ENCODE measurements at regions of chr6 and their contacts with region 1.

Region 1: GRCh38 chr6:26285143-26286134 is 79.6 kb upstream of the BTN3A2 start:
- DNase-seq: peak; percentile 96 to 98 (median 98)
- ATAC-seq: peak; percentile 94 to 96 (median 94)
- H3K4me3 ChIP-seq: peak overlapping the region; percentile 55 to 91 (median 72)
- H3K27ac ChIP-seq: peak overlapping the region; percentile 88 to 98 (median 97)
- H3K4me1 ChIP-seq: peaks cover 0 to 28% (median 9%) of the 10 kb centered on the region in 12 donors
- H3K27me3 ChIP-seq: no peaks in the 10 kb centered on the region
- CTCF ChIP-seq: no peak
- POLR2A ChIP-seq: peak in 1 of 2 donors; percentile 78

Region 2: DNA sequence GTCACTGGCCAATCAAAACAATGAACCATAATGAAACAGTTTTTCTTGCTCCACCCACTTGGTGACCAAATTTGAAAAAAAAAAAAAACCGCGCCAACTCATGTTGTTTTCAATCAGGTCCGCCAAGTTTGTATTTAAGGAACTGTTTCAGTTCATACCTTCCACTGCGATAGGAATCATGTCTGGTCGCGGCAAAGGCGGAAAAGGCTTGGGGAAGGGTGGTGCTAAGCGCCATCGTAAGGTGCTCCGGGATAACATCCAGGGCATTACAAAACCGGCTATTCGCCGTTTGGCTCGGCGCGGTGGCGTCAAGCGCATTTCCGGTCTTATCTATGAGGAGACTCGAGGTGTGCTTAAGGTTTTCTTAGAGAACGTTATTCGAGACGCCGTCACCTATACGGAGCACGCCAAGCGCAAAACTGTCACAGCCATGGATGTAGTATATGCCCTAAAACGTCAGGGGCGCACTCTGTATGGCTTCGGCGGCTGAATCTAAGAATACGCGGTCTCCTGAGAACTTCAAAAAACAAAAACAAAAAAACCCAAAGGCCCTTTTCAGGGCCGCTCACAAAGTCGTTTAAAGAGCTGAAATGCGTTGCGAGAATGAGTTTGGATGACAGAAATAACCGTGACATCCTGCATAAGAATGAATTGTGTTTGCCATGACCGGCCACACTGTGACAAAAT is 181.5 kb before region 1 on chr6:
- intact Hi-C with region 1: loop called in 1 of 10 experiments (anchors 10 kb)
- DNase-seq: peak; percentile 86 to 90 (median 87)
- ATAC-seq: peak; percentile 81 to 95 (median 93)
- H3K4me3 ChIP-seq: peak overlapping the region; percentile 5 to 69 (median 60)
- H3K27ac ChIP-seq: peak overlapping the region; percentile 18 to 90 (median 77)
- H3K4me1 ChIP-seq: peaks cover 0 to 18% (median 8%) of the 10 kb centered on the region in 12 donors
- H3K27me3 ChIP-seq: no peaks in the 10 kb centered on the region
- CTCF ChIP-seq: peak in 10 of 12 donors; percentile 17 to 54 (median 36)
- POLR2A ChIP-seq: peak; percentile 37 to 95

Region 3: DNA sequence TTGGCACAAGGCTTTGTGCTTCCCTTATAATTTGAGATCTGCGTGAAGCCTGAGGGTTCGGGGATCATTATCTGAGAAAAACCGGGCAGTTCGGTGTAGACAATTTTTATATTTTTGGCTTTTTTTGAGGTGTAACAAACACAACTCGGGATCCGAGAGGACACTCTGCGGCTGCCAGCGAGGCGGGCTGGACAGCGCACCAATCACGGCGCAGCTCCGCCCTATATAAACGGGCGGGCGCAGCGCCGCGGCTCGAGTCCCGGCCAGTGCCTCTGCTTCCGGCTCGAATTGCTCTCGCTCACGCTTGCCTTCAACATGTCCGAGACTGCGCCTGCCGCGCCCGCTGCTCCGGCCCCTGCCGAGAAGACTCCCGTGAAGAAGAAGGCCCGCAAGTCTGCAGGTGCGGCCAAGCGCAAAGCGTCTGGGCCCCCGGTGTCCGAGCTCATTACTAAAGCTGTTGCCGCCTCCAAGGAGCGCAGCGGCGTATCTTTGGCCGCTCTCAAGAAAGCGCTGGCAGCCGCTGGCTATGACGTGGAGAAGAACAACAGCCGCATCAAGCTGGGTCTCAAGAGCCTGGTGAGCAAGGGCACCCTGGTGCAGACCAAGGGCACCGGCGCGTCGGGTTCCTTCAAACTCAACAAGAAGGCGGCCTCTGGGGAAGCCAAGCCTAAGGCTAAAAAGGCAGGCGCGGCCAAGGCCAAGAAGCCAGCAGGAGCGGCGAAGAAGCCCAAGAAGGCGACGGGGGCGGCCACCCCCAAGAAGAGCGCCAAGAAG is 129.2 kb before region 1 on chr6:
- intact Hi-C with region 1: loop called in 1 of 10 experiments (anchors 1 kb)
- DNase-seq: peak; percentile 92 to 96 (median 93)
- ATAC-seq: peak; percentile 80 to 89 (median 86)
- H3K4me3 ChIP-seq: peak overlapping the region; percentile 49 to 94 (median 78)
- H3K27ac ChIP-seq: peak overlapping the region; percentile 70 to 98 (median 95)
- H3K4me1 ChIP-seq: peaks cover 0 to 30% (median 11%) of the 10 kb centered on the region in 12 donors
- H3K27me3 ChIP-seq: no peaks in the 10 kb centered on the region
- CTCF ChIP-seq: peak in 1 of 12 donors; percentile 7
- POLR2A ChIP-seq: peak; percentile 67 to 99

Region 4: DNA sequence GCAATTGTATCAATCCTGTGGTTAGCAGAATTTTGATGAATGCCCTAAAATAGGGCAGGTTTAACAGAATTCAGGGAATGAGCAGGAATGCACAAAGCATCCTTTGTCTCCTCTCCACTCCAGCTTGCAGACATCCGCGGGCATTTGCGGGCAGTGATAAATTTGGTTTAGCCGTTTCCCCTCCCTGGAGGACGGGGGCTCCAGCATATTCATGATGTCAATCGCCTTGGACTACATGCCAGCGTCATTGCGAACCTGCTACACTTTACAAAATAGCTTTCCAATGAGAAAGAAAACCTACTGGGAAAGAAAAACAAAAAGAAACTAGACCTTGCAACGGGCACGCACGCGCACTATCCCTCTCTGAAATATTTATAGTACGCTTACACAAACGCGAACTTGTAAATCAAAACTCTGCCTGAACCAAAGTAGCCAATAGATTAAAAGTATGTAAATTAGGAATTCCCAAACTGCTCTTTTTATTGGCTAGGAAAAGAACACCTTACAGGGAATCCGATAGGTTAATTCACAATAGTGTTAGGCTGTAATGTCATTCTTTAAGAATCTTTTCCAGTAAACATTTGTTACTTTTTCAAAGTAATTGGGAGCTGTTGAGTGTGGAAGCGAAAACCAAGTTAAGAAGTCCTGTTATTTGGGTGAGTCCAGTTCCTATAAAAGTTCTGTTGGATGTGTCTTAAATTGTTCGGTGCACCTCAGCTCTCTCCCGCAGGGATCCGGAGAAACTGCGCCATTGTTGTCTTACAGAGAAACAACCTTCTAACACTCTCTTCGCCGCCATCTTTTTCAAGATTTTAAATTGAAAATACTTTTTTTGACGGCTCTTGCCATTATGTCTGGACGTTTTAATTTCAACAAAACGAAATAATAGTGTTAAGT is 61.5 kb before region 1 on chr6:
- intact Hi-C with region 1: loop called in 2 of 10 experiments (anchors 5 to 10 kb)
- DNase-seq: peak; percentile 46 to 72 (median 70)
- ATAC-seq: peak; percentile 89 to 95 (median 92)
- H3K4me3 ChIP-seq: peak overlapping the region; percentile 15 to 72 (median 56)
- H3K27ac ChIP-seq: peak overlapping the region; percentile 75 to 97 (median 90)
- H3K4me1 ChIP-seq: peaks cover 0 to 13% (median 1%) of the 10 kb centered on the region in 12 donors
- H3K27me3 ChIP-seq: peaks cover 0 to 40% (median 4%) of the 10 kb centered on the region in 9 donors
- CTCF ChIP-seq: no peak
- POLR2A ChIP-seq: peak in 1 of 2 donors; percentile 63

Region 5: GRCh38 chr6:26312501-26313390 is 27.3 kb after region 1 on chr6:
- intact Hi-C with region 1: loop called in 2 of 10 experiments (anchors 2 kb)
- DNase-seq: peak; percentile 60 to 80 (median 75)
- ATAC-seq: peak; percentile 77 to 93 (median 88)
- H3K4me3 ChIP-seq: peak overlapping the region; percentile 12 to 66 (median 50)
- H3K27ac ChIP-seq: peak overlapping the region in 9 of 12 donors; percentile 4 to 67 (median 27)
- H3K4me1 ChIP-seq: peaks cover 0 to 27% (median 7%) of the 10 kb centered on the region in 12 donors
- H3K27me3 ChIP-seq: peaks cover 0 to 11% (median 0%) of the 10 kb centered on the region in 9 donors
- CTCF ChIP-seq: no peak
- POLR2A ChIP-seq: no peak

Region 6: GRCh38 chr6:26322645-26323482 is 37.4 kb after region 1 on chr6:
- intact Hi-C with region 1: no loop called
- DNase-seq: peak in 2 of 5 donors; percentile 37 to 59
- ATAC-seq: peak in 3 of 4 donors; percentile 77 to 84 (median 82)
- H3K4me3 ChIP-seq: peak overlapping the region; percentile 30 to 70 (median 56)
- H3K27ac ChIP-seq: peak overlapping the region in 4 of 12 donors; percentile 21 to 63 (median 33)
- H3K4me1 ChIP-seq: peaks cover 0 to 25% (median 5%) of the 10 kb centered on the region in 12 donors
- H3K27me3 ChIP-seq: peaks cover 12 to 57% (median 37%) of the 10 kb centered on the region in 9 donors
- CTCF ChIP-seq: no peak
- POLR2A ChIP-seq: no peak

Region 7: GRCh38 chr6:27132532-27133280 is 847.3 kb after region 1 on chr6:
- intact Hi-C with region 1: loop called in 1 of 10 experiments (anchors 10 kb)
- DNase-seq: peak; percentile 81 to 89 (median 86)
- ATAC-seq: peak; percentile 94 to 98 (median 97)
- H3K4me3 ChIP-seq: peak overlapping the region; percentile 15 to 68 (median 60)
- H3K27ac ChIP-seq: peak overlapping the region; percentile 34 to 91 (median 80)
- H3K4me1 ChIP-seq: peaks cover 0 to 46% (median 8%) of the 10 kb centered on the region in 12 donors
- H3K27me3 ChIP-seq: no peaks in the 10 kb centered on the region
- CTCF ChIP-seq: no peak
- POLR2A ChIP-seq: peak; percentile 53 to 97

Measured in heart left ventricle (tissue), 16 donors.